ENCODE measurements at regions of chr14 and their contacts with region 1.

Region 1: GRCh38 chr14:102437997-102438915 is 71.3 kb downstream of the ANKRD9 start:
- DNase-seq: peak; percentile 73
- H3K4me3 Mint-ChIP-seq: no peak overlapping the region
- H3K27ac Mint-ChIP-seq: no peak overlapping the region
- H3K4me1 Mint-ChIP-seq: no peaks in the 10 kb centered on the region
- H3K27me3 Mint-ChIP-seq: no peaks in the 10 kb centered on the region

Region 2: GRCh38 chr14:102192664-102193502 is 245.4 kb before region 1 on chr14:
- CTCF ChIA-PET with region 1: no interaction called
- POLR2A ChIA-PET with region 1: no interaction called
- intact Hi-C with region 1: no loop called
- DNase-seq: no peak
- H3K4me3 Mint-ChIP-seq: no peak overlapping the region
- H3K27ac Mint-ChIP-seq: no peak overlapping the region
- H3K4me1 Mint-ChIP-seq: peaks cover 24% of the 10 kb centered on the region
- H3K27me3 Mint-ChIP-seq: no peaks in the 10 kb centered on the region

Region 3: GRCh38 chr14:102516531-102517415 is 78.5 kb after region 1 on chr14:
- CTCF ChIA-PET with region 1: interaction called, 74 read pairs
- POLR2A ChIA-PET with region 1: no interaction called
- intact Hi-C with region 1: loop called (anchors 1 kb)
- DNase-seq: peak; percentile 70
- H3K4me3 Mint-ChIP-seq: peak overlapping the region; percentile 69
- H3K27ac Mint-ChIP-seq: no peak overlapping the region
- H3K4me1 Mint-ChIP-seq: peaks cover 3% of the 10 kb centered on the region
- H3K27me3 Mint-ChIP-seq: peaks cover 7% of the 10 kb centered on the region

Region 4: GRCh38 chr14:102524466-102525218 is 86.4 kb after region 1 on chr14:
- CTCF ChIA-PET with region 1: interaction called, 28 read pairs
- POLR2A ChIA-PET with region 1: no interaction called
- intact Hi-C with region 1: no loop called
- DNase-seq: peak; percentile 98
- H3K4me3 Mint-ChIP-seq: peak overlapping the region; percentile 68
- H3K27ac Mint-ChIP-seq: peak overlapping the region; percentile 26
- H3K4me1 Mint-ChIP-seq: peaks cover 28% of the 10 kb centered on the region
- H3K27me3 Mint-ChIP-seq: no peaks in the 10 kb centered on the region